ENCODE measurements at regions of chr6 and their contacts with region 1.

Region 1: GRCh38 chr6:16128759-16129622 is at the start of gene MYLIP:
- DNase-seq: peak; percentile 97
- ATAC-seq: peak; percentile 84
- H3K4me3 Mint-ChIP-seq: peak within 1 kb of the TSS; percentile 88
- H3K27ac Mint-ChIP-seq: peak within 1 kb of the TSS; percentile 93
- H3K4me1 Mint-ChIP-seq: peaks cover 35% of the 10 kb centered on the region
- H3K27me3 Mint-ChIP-seq: peaks cover 19% of the 10 kb centered on the region
- total RNA-seq, gene MYLIP: 17.3 to 17.6 TPM

Region 2: DNA sequence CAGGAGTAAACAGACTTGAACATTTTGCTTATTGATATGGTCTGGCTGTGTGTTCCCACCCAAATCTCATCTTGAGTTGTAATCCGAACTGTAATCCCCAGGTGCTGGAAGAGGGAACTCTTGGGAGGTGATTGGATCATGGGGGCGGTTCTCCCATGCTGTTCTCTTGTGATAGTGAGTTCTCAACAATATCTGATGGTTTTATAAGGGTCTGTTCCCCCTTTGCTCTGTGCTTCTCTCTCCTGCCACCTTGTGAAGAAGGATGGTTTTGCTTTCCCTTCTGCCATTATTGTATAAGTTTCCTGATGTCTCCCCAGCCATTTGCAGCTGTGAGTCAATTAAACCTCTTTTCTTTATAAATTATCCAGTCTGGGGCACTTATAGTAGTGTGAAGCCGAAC is 39.9 kb after region 1 on chr6:
- CTCF ChIA-PET with region 1: interaction called, 14 read pairs
- POLR2A ChIA-PET with region 1: interaction called, 4 read pairs
- DNase-seq: peak; percentile 39
- ATAC-seq: peak; percentile 79
- H3K4me3 Mint-ChIP-seq: no peak overlapping the region
- H3K27ac Mint-ChIP-seq: peak overlapping the region; percentile 37
- H3K4me1 Mint-ChIP-seq: peaks cover 25% of the 10 kb centered on the region
- H3K27me3 Mint-ChIP-seq: peaks cover 16% of the 10 kb centered on the region

Region 3: GRCh38 chr6:16206595-16207037 is 77.6 kb after region 1 on chr6:
- CTCF ChIA-PET with region 1: interaction called, 11 read pairs
- POLR2A ChIA-PET with region 1: interaction called, 3 read pairs
- DNase-seq: peak; percentile 56
- ATAC-seq: no peak
- H3K4me3 Mint-ChIP-seq: no peak overlapping the region
- H3K27ac Mint-ChIP-seq: no peak overlapping the region
- H3K4me1 Mint-ChIP-seq: peaks cover 6% of the 10 kb centered on the region
- H3K27me3 Mint-ChIP-seq: peaks cover 15% of the 10 kb centered on the region

Region 4: GRCh38 chr6:17907406-17908229 is 1778.6 kb after region 1 on chr6:
- CTCF ChIA-PET with region 1: no interaction called
- POLR2A ChIA-PET with region 1: no interaction called
- DNase-seq: peak; percentile 32
- ATAC-seq: peak; percentile 30
- H3K4me3 Mint-ChIP-seq: no peak overlapping the region
- H3K27ac Mint-ChIP-seq: no peak overlapping the region
- H3K4me1 Mint-ChIP-seq: peaks cover 24% of the 10 kb centered on the region
- H3K27me3 Mint-ChIP-seq: peaks cover 11% of the 10 kb centered on the region